ENCODE measurements at regions of chr21 and their contacts with region 1.

Region 1: DNA sequence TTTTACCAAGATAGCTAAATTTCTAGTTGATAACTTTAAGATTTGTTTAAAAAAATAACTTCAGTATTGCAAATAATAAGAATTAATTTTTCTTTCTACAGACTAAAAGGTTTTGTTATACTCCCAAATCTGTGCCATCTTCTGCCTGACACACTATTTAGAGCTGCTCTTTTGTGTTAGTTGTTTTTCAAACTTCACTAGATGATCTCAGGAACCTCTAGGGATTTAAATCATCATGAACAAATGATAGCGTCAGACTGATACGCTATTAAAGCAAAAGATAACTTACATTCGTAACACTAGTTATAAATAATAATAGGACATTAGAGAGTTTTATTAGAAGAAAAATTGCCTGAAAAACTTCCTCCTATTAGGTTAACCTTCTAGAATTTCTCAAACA is 243.1 kb upstream of the CXADR start:
- DNase-seq: no peak
- H3K4me3 ChIP-seq: no peak overlapping the region
- H3K27ac ChIP-seq: no peak overlapping the region
- H3K4me1 ChIP-seq: no peaks in the 10 kb centered on the region
- H3K27me3 ChIP-seq: no peaks in the 10 kb centered on the region
- CTCF ChIP-seq: no peak
- EP300 ChIP-seq: no peak
- POLR2A ChIP-seq: no peak

Region 2: DNA sequence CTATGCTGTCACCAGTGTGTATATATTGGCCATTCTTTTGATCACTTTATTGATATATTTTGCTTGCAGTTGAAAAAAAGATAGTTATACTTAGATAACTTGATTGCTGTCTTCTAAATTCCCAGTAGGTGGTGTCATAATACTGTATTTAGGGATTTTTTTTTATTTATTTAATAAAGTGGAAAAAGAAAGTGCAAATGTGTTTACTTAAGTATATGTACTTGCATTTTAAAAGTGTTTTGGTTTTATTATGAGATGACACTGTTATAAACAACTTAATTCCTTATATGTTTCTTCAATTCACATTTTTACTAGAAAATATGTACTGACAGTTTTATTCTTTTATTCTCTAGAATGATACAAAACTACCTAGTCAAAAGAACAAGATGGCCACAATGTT is 1375.2 kb before region 1 on chr21:
- intact Hi-C with region 1: loop called (anchors 10 kb)
- DNase-seq: no peak
- H3K4me3 ChIP-seq: no peak overlapping the region
- H3K27ac ChIP-seq: no peak overlapping the region
- H3K4me1 ChIP-seq: peaks cover 0 to 13% (median 2%) of the 10 kb centered on the region in 4 donors
- H3K27me3 ChIP-seq: no peaks in the 10 kb centered on the region
- CTCF ChIP-seq: peak in 1 of 4 experiments; percentile 47
- EP300 ChIP-seq: no peak
- POLR2A ChIP-seq: no peak

Region 3: GRCh38 chr21:16082038-16082816 is 1187.5 kb before region 1 on chr21:
- intact Hi-C with region 1: loop called (anchors 10 kb)
- DNase-seq: no peak
- H3K4me3 ChIP-seq: no peak overlapping the region
- H3K27ac ChIP-seq: no peak overlapping the region
- H3K4me1 ChIP-seq: peaks cover 0 to 4% (median 2%) of the 10 kb centered on the region in 4 donors
- H3K27me3 ChIP-seq: no peaks in the 10 kb centered on the region
- CTCF ChIP-seq: peak in 2 of 4 experiments; percentile 8 to 44
- EP300 ChIP-seq: no peak
- POLR2A ChIP-seq: no peak

Region 4: DNA sequence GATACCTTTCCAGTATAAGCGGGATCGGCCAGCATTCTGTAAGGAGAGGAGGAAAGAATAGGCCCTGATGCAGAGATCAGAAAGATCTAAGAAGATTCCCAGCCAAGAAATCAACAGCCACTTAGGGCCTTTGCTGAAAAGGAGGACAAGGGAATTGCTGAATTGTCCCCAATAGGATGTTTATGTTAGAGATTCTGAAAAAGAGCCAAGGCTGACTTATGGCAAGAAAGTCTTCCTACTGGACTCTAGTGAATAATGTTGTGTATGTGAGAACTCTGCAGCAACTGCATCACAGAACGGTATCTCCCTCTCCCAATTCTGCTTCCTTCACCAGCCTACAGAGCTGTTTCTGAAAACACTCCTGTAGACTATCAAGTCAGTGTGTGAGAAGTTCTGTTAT is 55.0 kb before region 1 on chr21:
- intact Hi-C with region 1: no loop called
- DNase-seq: no peak
- H3K4me3 ChIP-seq: no peak overlapping the region
- H3K27ac ChIP-seq: no peak overlapping the region
- H3K4me1 ChIP-seq: no peaks in the 10 kb centered on the region
- H3K27me3 ChIP-seq: no peaks in the 10 kb centered on the region
- CTCF ChIP-seq: no peak
- EP300 ChIP-seq: no peak
- POLR2A ChIP-seq: no peak

Measured in sigmoid colon (tissue), 7 donors.